Caco-2 (cell line): ENCODE measurements at regions of chr5 and their contacts with region 1.

Region 1: GRCh38 chr5:103224118-103224893 is 34.3 kb upstream of the MACIR start:
- DNase-seq: peak; percentile 60 to 67
- H3K4me3 ChIP-seq: no peak overlapping the region
- H3K4me3 Mint-ChIP-seq: peak overlapping the region; percentile 37
- H3K27ac Mint-ChIP-seq: no peak overlapping the region
- H3K4me1 ChIP-seq: no peaks in the 10 kb centered on the region
- H3K4me1 Mint-ChIP-seq: no peaks in the 10 kb centered on the region
- H3K27me3 ChIP-seq: no peaks in the 10 kb centered on the region
- H3K27me3 Mint-ChIP-seq: no peaks in the 10 kb centered on the region
- CTCF ChIP-seq: peak; percentile 69 to 79

Region 2: GRCh38 chr5:102583276-102584124 is 640.8 kb before region 1 on chr5:
- CTCF ChIA-PET with region 1: no interaction called
- POLR2A ChIA-PET with region 1: no interaction called
- intact Hi-C with region 1: loop called (anchors 1 kb)
- DNase-seq: no peak
- H3K4me3 ChIP-seq: no peak overlapping the region
- H3K4me3 Mint-ChIP-seq: no peak overlapping the region
- H3K27ac Mint-ChIP-seq: no peak overlapping the region
- H3K4me1 ChIP-seq: no peaks in the 10 kb centered on the region
- H3K4me1 Mint-ChIP-seq: no peaks in the 10 kb centered on the region
- H3K27me3 ChIP-seq: no peaks in the 10 kb centered on the region
- H3K27me3 Mint-ChIP-seq: no peaks in the 10 kb centered on the region
- CTCF ChIP-seq: peak in 1 of 2 experiments; percentile 63

Region 3: DNA sequence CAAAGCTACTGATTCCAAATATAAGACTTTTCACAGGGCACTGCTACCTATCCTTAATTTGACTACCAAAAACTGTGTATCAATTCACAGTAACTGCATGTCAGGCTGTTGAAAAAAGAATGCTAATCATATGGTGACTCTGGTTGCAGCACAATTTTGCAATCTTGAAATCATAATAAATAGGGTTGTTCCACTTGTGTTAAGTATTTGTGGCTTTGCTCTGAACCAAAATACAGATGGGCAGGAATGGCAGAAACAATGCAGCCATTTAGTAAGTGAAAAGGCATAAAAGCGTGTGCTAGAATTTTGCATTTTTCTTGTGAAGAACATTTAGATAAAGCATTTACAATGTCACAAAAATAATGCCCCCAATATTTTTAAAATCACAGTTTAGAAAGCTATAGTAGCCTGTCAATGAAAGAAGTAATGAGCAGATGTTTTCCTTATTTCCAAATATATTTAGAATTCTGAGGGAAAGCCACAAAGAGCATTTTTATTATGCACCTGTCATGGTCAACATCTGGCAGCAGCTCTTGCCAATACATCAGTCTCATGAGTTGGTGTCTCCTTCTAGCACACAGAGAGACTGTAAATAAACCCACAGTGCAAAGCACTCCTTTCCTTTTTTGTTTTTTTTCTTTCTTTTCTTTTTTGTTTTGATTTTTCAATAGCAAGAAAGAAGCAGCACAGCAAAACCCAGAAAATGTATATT is 524.0 kb before region 1 on chr5:
- CTCF ChIA-PET with region 1: no interaction called
- POLR2A ChIA-PET with region 1: no interaction called
- intact Hi-C with region 1: no loop called
- DNase-seq: no peak
- H3K4me3 ChIP-seq: no peak overlapping the region
- H3K4me3 Mint-ChIP-seq: no peak overlapping the region
- H3K27ac Mint-ChIP-seq: no peak overlapping the region
- H3K4me1 ChIP-seq: peaks cover 7% of the 10 kb centered on the region; the same call in 1 of the 2 replicates
- H3K4me1 Mint-ChIP-seq: no peaks in the 10 kb centered on the region
- H3K27me3 ChIP-seq: no peaks in the 10 kb centered on the region
- H3K27me3 Mint-ChIP-seq: no peaks in the 10 kb centered on the region
- CTCF ChIP-seq: no peak

Region 4: GRCh38 chr5:102778478-102778877 is 445.8 kb before region 1 on chr5:
- CTCF ChIA-PET with region 1: no interaction called
- POLR2A ChIA-PET with region 1: no interaction called
- intact Hi-C with region 1: loop called (anchors 10 kb)
- DNase-seq: no peak
- H3K4me3 ChIP-seq: no peak overlapping the region
- H3K4me3 Mint-ChIP-seq: no peak overlapping the region
- H3K27ac Mint-ChIP-seq: no peak overlapping the region
- H3K4me1 ChIP-seq: no peaks in the 10 kb centered on the region
- H3K4me1 Mint-ChIP-seq: no peaks in the 10 kb centered on the region
- H3K27me3 ChIP-seq: no peaks in the 10 kb centered on the region
- H3K27me3 Mint-ChIP-seq: no peaks in the 10 kb centered on the region
- CTCF ChIP-seq: no peak

Region 5: GRCh38 chr5:102971697-102972293 is 252.5 kb before region 1 on chr5:
- CTCF ChIA-PET with region 1: no interaction called
- POLR2A ChIA-PET with region 1: no interaction called
- intact Hi-C with region 1: loop called (anchors 1 kb)
- DNase-seq: peak in 1 of 2 experiments; percentile 6
- H3K4me3 ChIP-seq: no peak overlapping the region
- H3K4me3 Mint-ChIP-seq: no peak overlapping the region
- H3K27ac Mint-ChIP-seq: no peak overlapping the region
- H3K4me1 ChIP-seq: no peaks in the 10 kb centered on the region
- H3K4me1 Mint-ChIP-seq: no peaks in the 10 kb centered on the region
- H3K27me3 ChIP-seq: no peaks in the 10 kb centered on the region
- H3K27me3 Mint-ChIP-seq: no peaks in the 10 kb centered on the region
- CTCF ChIP-seq: peak in 1 of 2 experiments; percentile 47

Region 6: DNA sequence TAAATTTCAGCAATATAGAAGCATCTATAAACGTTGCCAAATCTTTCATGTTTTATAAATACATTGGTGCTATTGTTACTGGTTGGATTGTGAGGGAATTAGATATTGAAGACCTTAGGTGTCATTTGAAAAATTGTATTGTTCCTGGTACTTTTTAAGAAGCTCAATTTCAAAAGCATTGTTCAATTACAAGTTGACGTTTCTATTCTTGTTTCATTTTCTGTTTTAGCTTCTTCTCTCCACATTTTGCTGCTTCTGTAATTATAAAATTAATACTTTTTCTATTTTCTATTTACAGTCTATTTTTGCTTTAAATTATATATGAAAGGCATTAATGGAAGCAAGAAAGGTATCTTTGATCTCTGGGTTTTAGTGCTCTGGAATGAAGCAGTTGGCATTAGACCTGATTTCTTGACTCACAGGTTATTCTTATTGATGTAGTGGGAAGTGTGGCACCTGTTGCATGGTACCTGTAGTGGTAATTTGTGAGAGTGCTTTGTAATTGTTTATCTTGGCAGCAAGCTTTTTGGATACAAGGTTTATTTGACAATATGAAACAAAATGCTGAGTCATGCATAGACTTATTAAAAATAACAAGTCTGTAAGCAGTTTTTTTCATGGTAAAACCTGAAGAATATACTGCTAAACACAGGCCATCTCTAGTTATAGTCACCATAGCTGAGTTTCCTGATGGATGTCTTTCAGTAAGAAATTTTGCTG is 47.4 kb after region 1 on chr5:
- CTCF ChIA-PET with region 1: no interaction called
- POLR2A ChIA-PET with region 1: no interaction called
- intact Hi-C with region 1: no loop called
- DNase-seq: no peak
- H3K4me3 ChIP-seq: no peak overlapping the region
- H3K4me3 Mint-ChIP-seq: no peak overlapping the region
- H3K27ac Mint-ChIP-seq: no peak overlapping the region
- H3K4me1 ChIP-seq: peaks cover 4% of the 10 kb centered on the region; the same call in 1 of the 2 replicates
- H3K4me1 Mint-ChIP-seq: no peaks in the 10 kb centered on the region
- H3K27me3 ChIP-seq: no peaks in the 10 kb centered on the region
- H3K27me3 Mint-ChIP-seq: no peaks in the 10 kb centered on the region
- CTCF ChIP-seq: no peak

Region 7: GRCh38 chr5:103475629-103476240 is 251.4 kb after region 1 on chr5:
- CTCF ChIA-PET with region 1: no interaction called
- POLR2A ChIA-PET with region 1: no interaction called
- intact Hi-C with region 1: loop called (anchors 2 kb)
- DNase-seq: peak in 1 of 2 experiments; percentile 53
- H3K4me3 ChIP-seq: no peak overlapping the region
- H3K4me3 Mint-ChIP-seq: no peak overlapping the region
- H3K27ac Mint-ChIP-seq: no peak overlapping the region
- H3K4me1 ChIP-seq: peaks cover 8% of the 10 kb centered on the region; the same call in 1 of the 2 replicates
- H3K4me1 Mint-ChIP-seq: peaks cover 5% of the 10 kb centered on the region
- H3K27me3 ChIP-seq: no peaks in the 10 kb centered on the region
- H3K27me3 Mint-ChIP-seq: no peaks in the 10 kb centered on the region
- CTCF ChIP-seq: peak; percentile 51 to 65